ENCODE measurements at regions of chr4 and their contacts with region 1.

Region 1: DNA sequence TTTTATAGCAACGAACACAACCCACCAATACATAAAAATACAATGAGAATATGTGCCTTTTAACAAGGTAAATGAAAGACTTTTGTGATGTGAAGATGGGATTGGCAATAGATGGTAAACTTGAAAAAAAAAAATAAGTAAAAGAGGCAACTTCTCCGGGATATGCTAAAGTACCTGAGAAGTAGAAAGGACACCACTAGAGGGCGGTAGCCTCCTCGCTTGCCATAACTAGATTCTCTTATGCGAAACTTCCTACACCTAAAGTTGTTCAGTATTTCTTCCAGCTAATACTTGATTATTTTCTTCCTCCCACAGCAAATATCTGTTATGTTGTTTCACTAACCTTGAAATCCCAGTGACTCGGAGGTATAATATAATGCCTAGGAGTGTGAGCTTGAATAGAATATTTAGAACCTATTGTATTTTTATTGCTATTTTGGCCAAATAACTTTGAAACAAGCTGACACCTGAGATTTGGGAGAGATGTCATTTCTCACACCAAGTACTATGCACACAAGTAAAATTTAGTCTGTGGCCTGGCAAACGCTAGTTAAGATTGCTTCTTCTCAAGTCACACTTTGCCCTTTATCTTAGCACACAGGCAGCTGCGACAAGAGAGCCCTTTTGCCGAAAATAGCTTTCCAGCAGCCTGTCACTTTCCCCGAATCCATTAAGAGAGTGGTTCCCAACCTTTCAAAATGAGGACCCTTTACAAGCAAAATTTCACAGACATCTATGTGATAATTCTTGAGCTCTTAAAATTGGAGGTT is 44.9 kb upstream of the PDLIM5 start:
- DNase-seq: peak; percentile 74
- ATAC-seq: peak; percentile 65
- H3K4me3 Mint-ChIP-seq: no peak overlapping the region
- H3K27ac Mint-ChIP-seq: no peak overlapping the region
- H3K4me1 Mint-ChIP-seq: no peaks in the 10 kb centered on the region
- H3K27me3 Mint-ChIP-seq: peaks cover 4% of the 10 kb centered on the region

Region 2: DNA sequence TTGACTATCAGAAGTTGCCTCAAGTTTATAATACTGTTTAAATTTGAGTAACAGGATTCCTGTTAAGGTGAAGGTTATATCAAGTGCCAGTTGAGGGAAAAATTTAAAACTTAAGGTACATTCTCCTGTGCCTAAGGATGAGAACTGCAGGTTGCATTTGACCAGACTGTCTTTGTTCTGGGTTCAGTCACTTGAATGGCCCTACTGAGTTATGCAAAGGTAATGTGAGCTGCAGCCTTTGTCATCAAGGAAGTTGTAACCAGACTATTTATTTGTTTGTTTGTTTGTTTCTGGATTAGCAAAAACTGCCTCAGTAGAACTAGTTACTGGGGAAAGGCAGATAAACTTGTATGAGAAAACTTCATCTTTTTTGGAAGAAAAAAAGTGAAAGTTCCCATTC is 446.4 kb before region 1 on chr4:
- CTCF ChIA-PET with region 1: no interaction called
- POLR2A ChIA-PET with region 1: no interaction called
- intact Hi-C with region 1: no loop called
- DNase-seq: no peak
- ATAC-seq: no peak
- H3K4me3 Mint-ChIP-seq: no peak overlapping the region
- H3K27ac Mint-ChIP-seq: no peak overlapping the region
- H3K4me1 Mint-ChIP-seq: no peaks in the 10 kb centered on the region
- H3K27me3 Mint-ChIP-seq: no peaks in the 10 kb centered on the region

Region 3: DNA sequence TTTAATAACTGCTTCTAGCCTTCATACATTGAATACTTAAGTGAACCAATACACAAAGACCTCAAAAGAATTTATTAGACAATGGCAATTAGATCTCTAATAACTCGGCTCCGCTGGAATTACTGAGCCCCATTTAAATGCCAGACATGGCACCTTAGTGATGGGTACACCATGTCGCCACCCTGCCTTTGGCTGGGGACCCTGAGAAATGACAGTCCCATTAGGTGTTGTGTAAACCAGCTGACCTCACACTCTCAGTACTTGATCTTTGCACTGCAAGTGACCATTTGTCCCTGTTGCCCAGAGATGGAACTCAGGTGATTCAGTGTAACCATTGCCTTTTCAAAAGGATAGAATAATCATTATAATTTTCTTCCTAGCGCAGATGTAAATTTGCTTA is 343.8 kb before region 1 on chr4:
- CTCF ChIA-PET with region 1: no interaction called
- POLR2A ChIA-PET with region 1: no interaction called
- intact Hi-C with region 1: no loop called
- DNase-seq: no peak
- ATAC-seq: no peak
- H3K4me3 Mint-ChIP-seq: no peak overlapping the region
- H3K27ac Mint-ChIP-seq: no peak overlapping the region
- H3K4me1 Mint-ChIP-seq: no peaks in the 10 kb centered on the region
- H3K27me3 Mint-ChIP-seq: no peaks in the 10 kb centered on the region

Region 4: GRCh38 chr4:94304365-94304971 is 102.4 kb before region 1 on chr4:
- CTCF ChIA-PET with region 1: no interaction called
- POLR2A ChIA-PET with region 1: no interaction called
- intact Hi-C with region 1: loop called in 1 of 2 experiments (anchors 5 kb)
- DNase-seq: peak; percentile 29
- ATAC-seq: no peak
- H3K4me3 Mint-ChIP-seq: no peak overlapping the region
- H3K27ac Mint-ChIP-seq: no peak overlapping the region
- H3K4me1 Mint-ChIP-seq: no peaks in the 10 kb centered on the region
- H3K27me3 Mint-ChIP-seq: no peaks in the 10 kb centered on the region

Region 5: DNA sequence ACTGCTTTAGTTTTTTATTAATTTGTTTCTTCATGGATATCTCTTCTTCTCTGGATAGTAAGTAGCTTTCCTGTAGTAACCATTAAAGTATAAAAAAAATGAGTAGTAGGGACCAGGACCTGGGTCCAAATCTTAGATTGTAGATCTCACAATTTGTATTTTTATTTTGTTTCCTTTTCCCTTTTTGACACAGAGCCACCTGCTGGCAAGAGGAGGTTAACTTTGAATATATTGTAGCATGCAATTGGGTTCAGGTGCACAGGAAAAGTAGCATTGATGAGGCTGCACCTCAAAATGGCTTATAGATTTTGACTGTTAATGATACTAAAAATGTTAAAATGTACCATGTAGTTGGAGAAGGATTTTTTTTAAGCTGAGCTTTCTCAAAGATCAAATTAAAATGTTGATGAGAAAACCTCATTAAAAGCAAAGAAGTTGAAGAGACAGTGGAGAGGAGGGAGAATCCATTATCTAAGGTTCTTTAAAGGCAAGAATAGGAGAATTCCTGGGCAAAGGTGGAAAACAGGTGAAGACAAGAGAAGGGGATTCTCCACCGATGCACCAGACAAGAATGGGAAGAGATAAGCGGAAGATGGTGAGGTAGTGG is 15.9 kb before region 1 on chr4:
- CTCF ChIA-PET with region 1: interaction called, 14 read pairs
- POLR2A ChIA-PET with region 1: no interaction called
- intact Hi-C with region 1: no loop called
- DNase-seq: peak; percentile 43
- ATAC-seq: no peak
- H3K4me3 Mint-ChIP-seq: no peak overlapping the region
- H3K27ac Mint-ChIP-seq: no peak overlapping the region
- H3K4me1 Mint-ChIP-seq: no peaks in the 10 kb centered on the region
- H3K27me3 Mint-ChIP-seq: peaks cover 7% of the 10 kb centered on the region

Region 6: DNA sequence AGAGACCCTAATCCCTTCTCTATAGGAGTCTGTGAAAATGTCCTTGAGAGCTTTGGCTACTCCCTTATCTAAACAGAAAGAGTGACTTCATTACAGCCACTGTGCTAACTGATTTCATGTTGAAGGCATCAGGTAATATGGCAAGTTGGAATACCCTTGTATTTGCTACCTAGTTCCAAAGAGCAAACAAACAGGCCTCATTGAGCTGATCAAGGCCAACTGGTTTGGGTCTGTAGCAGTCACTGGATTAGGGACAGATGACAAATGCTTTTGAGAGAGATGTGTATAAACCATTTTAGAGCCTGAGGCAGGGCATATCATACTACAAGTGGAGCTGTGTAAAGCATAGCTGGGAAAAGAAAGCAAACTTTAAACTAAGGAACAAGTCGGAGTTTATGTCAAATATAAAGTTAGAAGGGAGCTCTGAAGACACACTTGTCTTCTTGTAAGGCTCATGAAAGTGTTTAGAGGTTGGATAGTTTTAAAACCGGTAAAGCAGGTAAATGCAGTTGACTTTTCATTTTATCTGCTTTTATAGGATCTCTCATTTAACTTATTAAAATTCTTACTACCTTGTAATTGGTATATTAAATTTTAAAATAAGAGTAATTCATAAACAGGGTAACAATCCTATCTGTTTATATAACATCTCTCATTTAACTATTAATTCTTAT is 22.2 kb after region 1 on chr4:
- CTCF ChIA-PET with region 1: interaction called, 16 read pairs
- POLR2A ChIA-PET with region 1: no interaction called
- intact Hi-C with region 1: no loop called
- DNase-seq: no peak
- ATAC-seq: no peak
- H3K4me3 Mint-ChIP-seq: no peak overlapping the region
- H3K27ac Mint-ChIP-seq: no peak overlapping the region
- H3K4me1 Mint-ChIP-seq: no peaks in the 10 kb centered on the region
- H3K27me3 Mint-ChIP-seq: no peaks in the 10 kb centered on the region

Region 7: GRCh38 chr4:94595879-94596483 is 189.1 kb after region 1 on chr4:
- CTCF ChIA-PET with region 1: interaction called, 12 read pairs
- POLR2A ChIA-PET with region 1: no interaction called
- intact Hi-C with region 1: loop called (anchors 1 kb)
- DNase-seq: no peak
- ATAC-seq: peak; percentile 53
- H3K4me3 Mint-ChIP-seq: no peak overlapping the region
- H3K27ac Mint-ChIP-seq: no peak overlapping the region
- H3K4me1 Mint-ChIP-seq: no peaks in the 10 kb centered on the region
- H3K27me3 Mint-ChIP-seq: no peaks in the 10 kb centered on the region

Region 8: GRCh38 chr4:95044324-95044837 is 637.5 kb after region 1 on chr4:
- CTCF ChIA-PET with region 1: no interaction called
- POLR2A ChIA-PET with region 1: no interaction called
- intact Hi-C with region 1: no loop called
- DNase-seq: no peak
- ATAC-seq: no peak
- H3K4me3 Mint-ChIP-seq: no peak overlapping the region
- H3K27ac Mint-ChIP-seq: no peak overlapping the region
- H3K4me1 Mint-ChIP-seq: no peaks in the 10 kb centered on the region
- H3K27me3 Mint-ChIP-seq: no peaks in the 10 kb centered on the region